ENCODE measurements at regions of chr15 and their contacts with region 1.

Region 1: GRCh38 chr15:101188637-101189408 is 63.0 kb downstream of the CHSY1 start:
- DNase-seq: no peak
- H3K4me3 ChIP-seq: no peak overlapping the region
- H3K4me3 Mint-ChIP-seq: no peak overlapping the region
- H3K27ac ChIP-seq: peak overlapping the region in 1 of 2 donors; percentile 70
- H3K27ac Mint-ChIP-seq: peak overlapping the region in 6 of 7 donors; percentile 19 to 81 (median 77)
- H3K4me1 ChIP-seq: peaks cover 30 to 42% of the 10 kb centered on the region in 2 donors
- H3K4me1 Mint-ChIP-seq: peaks cover 58% of the 10 kb centered on the region
- H3K27me3 ChIP-seq: no peaks in the 10 kb centered on the region
- H3K27me3 Mint-ChIP-seq: no peaks in the 10 kb centered on the region
- CTCF ChIP-seq: no peak

Region 2: GRCh38 chr15:101121511-101122090 is 67.2 kb before region 1 on chr15:
- intact Hi-C with region 1: loop called (anchors 5 to 10 kb)
- DNase-seq: peak; percentile 50 to 66 (median 53)
- H3K4me3 ChIP-seq: peak overlapping the region; percentile 14 to 39 (median 37)
- H3K4me3 Mint-ChIP-seq: peak overlapping the region; percentile 85 to 87
- H3K27ac ChIP-seq: no peak overlapping the region
- H3K27ac Mint-ChIP-seq: peak overlapping the region in 6 of 7 donors; percentile 26 to 88 (median 68)
- H3K4me1 ChIP-seq: peaks cover 46 to 57% of the 10 kb centered on the region in 2 donors
- H3K4me1 Mint-ChIP-seq: peaks cover 57% of the 10 kb centered on the region
- H3K27me3 ChIP-seq: no peaks in the 10 kb centered on the region
- H3K27me3 Mint-ChIP-seq: peaks cover 1 to 6% (median 2%) of the 10 kb centered on the region in 3 donors
- CTCF ChIP-seq: peak; percentile 41

Region 3: GRCh38 chr15:101127506-101128076 is 61.2 kb before region 1 on chr15:
- intact Hi-C with region 1: loop called (anchors 5 to 10 kb)
- DNase-seq: peak in 2 of 3 donors; percentile 25 to 40
- H3K4me3 ChIP-seq: peak overlapping the region in 1 of 3 experiments; percentile 30
- H3K4me3 Mint-ChIP-seq: peak overlapping the region; percentile 59 to 71
- H3K27ac ChIP-seq: peak overlapping the region; percentile 57 to 71
- H3K27ac Mint-ChIP-seq: peak overlapping the region; percentile 11 to 91 (median 88)
- H3K4me1 ChIP-seq: peaks cover 83 to 93% of the 10 kb centered on the region in 2 donors
- H3K4me1 Mint-ChIP-seq: peaks cover 85% of the 10 kb centered on the region
- H3K27me3 ChIP-seq: no peaks in the 10 kb centered on the region
- H3K27me3 Mint-ChIP-seq: peaks cover 0 to 1% (median 0%) of the 10 kb centered on the region in 3 donors
- CTCF ChIP-seq: no peak

Region 4: GRCh38 chr15:101242160-101242998 is 53.6 kb after region 1 on chr15:
- intact Hi-C with region 1: loop called in 1 of 2 experiments (anchors 5 kb)
- DNase-seq: peak; percentile 85 to 91 (median 87)
- H3K4me3 ChIP-seq: peak overlapping the region in 2 of 3 experiments; percentile 33 to 69
- H3K4me3 Mint-ChIP-seq: peak overlapping the region; percentile 70 to 76
- H3K27ac ChIP-seq: peak overlapping the region; percentile 87
- H3K27ac Mint-ChIP-seq: peak overlapping the region; percentile 89 to 97 (median 96)
- H3K4me1 ChIP-seq: peaks cover 99 to 100% of the 10 kb centered on the region in 2 donors
- H3K4me1 Mint-ChIP-seq: peaks cover 96% of the 10 kb centered on the region
- H3K27me3 ChIP-seq: no peaks in the 10 kb centered on the region
- H3K27me3 Mint-ChIP-seq: peaks cover 0 to 2% (median 0%) of the 10 kb centered on the region in 3 donors
- CTCF ChIP-seq: no peak

Region 5: DNA sequence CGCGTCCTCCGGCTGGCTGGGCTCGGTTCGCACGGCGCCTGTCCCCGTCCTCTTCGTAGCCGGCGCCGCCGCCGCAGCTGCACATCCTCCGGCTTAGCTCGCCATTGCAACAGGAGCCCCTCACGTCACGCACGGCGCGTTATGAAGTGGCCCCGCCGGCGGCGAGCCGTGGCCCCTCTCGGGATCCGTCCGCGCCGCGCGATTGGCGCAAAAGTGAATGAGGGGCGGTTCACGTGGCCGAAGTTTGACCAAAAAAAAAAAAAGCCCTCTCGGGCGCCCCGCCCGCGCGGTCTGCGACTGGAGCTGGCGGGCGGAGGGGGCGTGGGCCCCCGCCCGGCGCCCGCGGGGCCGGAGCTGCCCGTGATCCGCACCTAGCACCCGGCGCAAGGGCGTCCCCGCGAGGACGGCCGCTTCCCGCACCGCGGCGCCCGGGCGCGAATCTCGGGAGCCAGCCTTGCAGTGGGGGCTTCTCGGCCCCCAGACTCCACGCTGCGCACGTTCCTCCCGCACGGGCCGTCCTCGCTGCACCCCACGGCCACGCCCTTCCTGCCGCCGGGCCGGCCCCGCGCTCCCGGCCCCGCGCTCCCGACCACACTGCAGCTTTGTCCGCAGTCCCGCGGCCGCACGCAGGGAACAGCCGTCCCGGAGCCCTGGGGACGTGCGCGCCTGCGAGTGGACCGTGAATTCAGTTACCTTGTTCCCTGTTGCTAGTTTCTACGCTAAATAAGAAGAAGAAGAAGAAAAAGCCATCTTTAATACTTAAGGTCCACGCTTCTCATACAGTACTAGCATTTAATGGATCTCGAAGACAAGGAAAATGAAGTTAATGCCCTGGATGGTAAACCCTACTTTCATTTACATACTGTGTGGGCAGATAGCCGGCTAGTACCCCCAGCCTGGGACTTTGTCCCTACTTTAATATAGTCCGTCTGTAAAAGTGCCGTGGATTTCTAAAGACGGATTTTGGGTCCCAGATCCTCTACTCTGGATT is 63.3 kb after region 1 on chr15 and contains the start of gene CHSY1:
- intact Hi-C with region 1: loop called in 1 of 2 experiments (anchors 5 kb)
- DNase-seq: peak; percentile 93 to 95 (median 94)
- H3K4me3 ChIP-seq: peak within 1 kb of the TSS; percentile 87 to 96 (median 92)
- H3K4me3 Mint-ChIP-seq: peak within 1 kb of the TSS; percentile 95 to 96
- H3K27ac ChIP-seq: peak within 1 kb of the TSS; percentile 48 to 83
- H3K27ac Mint-ChIP-seq: peak within 1 kb of the TSS; percentile 84 to 92 (median 92)
- H3K4me1 ChIP-seq: peaks cover 46 to 48% of the 10 kb centered on the region in 2 donors
- H3K4me1 Mint-ChIP-seq: peaks cover 48% of the 10 kb centered on the region
- H3K27me3 ChIP-seq: no peaks in the 10 kb centered on the region
- H3K27me3 Mint-ChIP-seq: peaks cover 2 to 11% (median 7%) of the 10 kb centered on the region in 3 donors
- CTCF ChIP-seq: no peak
- polyA plus RNA-seq, gene CHSY1: 2.7 to 19.0 (median 3.0) TPM

Region 6: DNA sequence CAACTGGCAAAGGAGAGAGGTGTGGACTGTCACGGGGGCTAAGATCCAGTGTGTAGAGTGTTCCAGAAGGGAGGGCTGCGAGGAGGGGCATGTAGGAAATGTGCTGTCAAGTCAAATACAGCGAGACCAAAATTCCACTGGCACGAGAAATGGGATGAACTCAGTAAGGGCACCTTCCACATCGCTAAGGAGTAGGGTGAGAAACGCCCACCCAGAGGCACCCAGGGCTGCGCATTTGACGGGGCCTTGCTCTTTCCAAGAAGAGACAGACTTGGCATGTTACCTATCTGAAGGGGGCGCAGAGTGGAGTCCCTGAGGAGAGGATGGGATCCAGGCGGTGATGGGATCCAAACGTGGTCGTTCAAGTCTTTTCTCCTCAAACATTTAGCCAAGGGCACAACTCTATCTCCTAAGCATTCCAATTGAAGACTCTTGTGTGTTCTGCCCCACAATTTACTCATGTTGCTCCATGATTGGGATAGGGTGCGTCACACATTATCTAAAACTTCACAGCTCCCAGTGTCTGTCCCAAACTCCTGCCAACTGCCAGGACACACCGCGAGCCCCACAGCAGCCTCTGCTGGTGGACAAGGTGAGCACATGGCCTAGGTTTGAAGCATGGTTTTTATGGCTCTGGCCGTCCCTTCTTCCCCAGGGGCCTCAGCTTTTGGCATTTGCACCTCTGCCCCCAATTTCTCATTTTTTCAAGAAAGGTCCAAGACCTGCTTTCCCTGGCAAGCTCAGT is 80.8 kb after region 1 on chr15:
- intact Hi-C with region 1: no loop called
- DNase-seq: peak in 1 of 3 donors; percentile 33
- H3K4me3 ChIP-seq: no peak overlapping the region
- H3K4me3 Mint-ChIP-seq: no peak overlapping the region
- H3K27ac ChIP-seq: no peak overlapping the region
- H3K27ac Mint-ChIP-seq: peak overlapping the region in 2 of 7 donors; percentile 55 to 63
- H3K4me1 ChIP-seq: no peaks in the 10 kb centered on the region
- H3K4me1 Mint-ChIP-seq: no peaks in the 10 kb centered on the region
- H3K27me3 ChIP-seq: no peaks in the 10 kb centered on the region
- H3K27me3 Mint-ChIP-seq: peaks cover 5 to 7% (median 7%) of the 10 kb centered on the region in 3 donors
- CTCF ChIP-seq: no peak

Region 7: DNA sequence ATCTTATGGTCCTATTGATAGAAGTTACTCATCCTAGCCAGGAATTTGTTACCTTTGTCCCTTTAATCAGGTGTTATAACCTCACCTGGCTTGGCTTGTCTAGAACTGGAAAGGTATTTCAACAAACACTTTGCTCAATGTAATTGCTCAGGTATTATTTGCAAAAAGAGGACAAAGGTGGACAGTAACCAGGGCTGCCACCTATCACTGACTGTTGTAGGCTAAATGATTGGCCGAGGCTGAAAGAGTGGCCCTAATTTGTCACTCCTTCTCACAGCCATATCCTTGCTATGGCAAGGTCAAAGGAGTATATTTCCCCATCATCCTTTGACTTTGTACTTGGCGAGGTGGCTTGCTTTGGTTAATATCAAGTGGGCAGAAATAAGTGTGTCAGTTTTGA is 91.2 kb after region 1 on chr15:
- intact Hi-C with region 1: no loop called
- DNase-seq: no peak
- H3K4me3 ChIP-seq: no peak overlapping the region
- H3K4me3 Mint-ChIP-seq: no peak overlapping the region
- H3K27ac ChIP-seq: no peak overlapping the region
- H3K27ac Mint-ChIP-seq: peak overlapping the region in 1 of 7 donors; percentile 24
- H3K4me1 ChIP-seq: peaks cover 17 to 20% of the 10 kb centered on the region in 2 donors
- H3K4me1 Mint-ChIP-seq: peaks cover 20% of the 10 kb centered on the region
- H3K27me3 ChIP-seq: no peaks in the 10 kb centered on the region
- H3K27me3 Mint-ChIP-seq: peaks cover 0 to 5% (median 0%) of the 10 kb centered on the region in 3 donors
- CTCF ChIP-seq: no peak

Region 8: DNA sequence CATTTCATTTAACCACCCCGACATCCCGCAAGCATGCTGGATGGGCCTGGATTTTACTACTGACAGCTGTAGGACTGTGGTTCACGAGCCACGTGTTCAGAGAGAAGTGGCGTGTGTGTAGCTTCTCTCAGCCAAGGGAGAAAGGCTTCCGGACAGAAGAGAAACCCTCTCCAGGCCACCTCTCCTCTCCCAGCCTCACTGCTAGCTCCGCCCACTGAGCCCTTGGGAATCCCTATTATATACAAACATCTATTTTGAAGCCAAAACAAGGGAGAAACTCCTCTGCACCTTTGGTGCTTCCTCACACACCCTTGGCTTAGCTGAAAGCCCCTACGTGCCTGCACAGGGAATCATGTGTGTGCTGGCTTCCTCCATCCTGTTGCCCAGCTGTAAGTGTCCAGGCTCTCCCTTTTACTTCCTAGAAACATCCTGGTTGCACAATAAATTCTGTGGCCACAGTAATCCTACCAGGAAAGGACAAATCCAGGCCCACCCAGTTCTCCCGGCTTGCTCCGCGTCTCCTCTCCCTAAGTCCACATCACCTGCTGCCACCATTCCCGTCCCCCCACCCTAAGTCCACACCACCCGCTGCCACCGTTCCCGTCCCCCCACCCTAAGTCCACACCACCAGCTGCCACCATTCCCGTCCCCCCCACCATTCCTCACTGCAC is 270.2 kb after region 1 on chr15:
- intact Hi-C with region 1: no loop called
- DNase-seq: no peak
- H3K4me3 ChIP-seq: no peak overlapping the region
- H3K4me3 Mint-ChIP-seq: no peak overlapping the region
- H3K27ac ChIP-seq: no peak overlapping the region
- H3K27ac Mint-ChIP-seq: peak overlapping the region in 1 of 7 donors; percentile 13
- H3K4me1 ChIP-seq: peaks cover 26 to 27% of the 10 kb centered on the region in 2 donors
- H3K4me1 Mint-ChIP-seq: peaks cover 26% of the 10 kb centered on the region
- H3K27me3 ChIP-seq: peaks cover 0 to 3% of the 10 kb centered on the region in 2 donors
- H3K27me3 Mint-ChIP-seq: peaks cover 3 to 12% (median 11%) of the 10 kb centered on the region in 3 donors
- CTCF ChIP-seq: no peak